WTC11 (cell line): ENCODE measurements at regions of chr16 and their contacts with region 1.

Region 1: GRCh38 chr16:4957720-4958509 is at the start of gene SEC14L5:
- DNase-seq: peak; percentile 100
- ATAC-seq: peak; percentile 95
- H3K4me3 Mint-ChIP-seq: peak within 1 kb of the TSS; percentile 89
- H3K27ac Mint-ChIP-seq: peak within 1 kb of the TSS; percentile 87
- H3K4me1 Mint-ChIP-seq: peaks cover 20% of the 10 kb centered on the region
- H3K27me3 Mint-ChIP-seq: peaks cover 13% of the 10 kb centered on the region
- CTCF ChIP-seq: no peak
- total RNA-seq, gene SEC14L5: 2.1 to 2.4 TPM (median 2.3 TPM) in 3 replicates

Region 2: GRCh38 chr16:4846891-4847773 is 110.8 kb before region 1 on chr16 and contains the starts of genes GLYR1 and UBN1:
- CTCF ChIA-PET with region 1: interaction called, 10 read pairs
- POLR2A ChIA-PET with region 1: no interaction called
- DNase-seq: peak; percentile 100
- ATAC-seq: peak; percentile 92
- H3K4me3 Mint-ChIP-seq: peak within 1 kb of the TSS; percentile 84
- H3K27ac Mint-ChIP-seq: peak within 1 kb of the TSS; percentile 83
- H3K4me1 Mint-ChIP-seq: peaks cover 30% of the 10 kb centered on the region
- H3K27me3 Mint-ChIP-seq: no peaks in the 10 kb centered on the region
- CTCF ChIP-seq: no peak
- total RNA-seq, gene GLYR1: 99.7 to 103 TPM (median 99.7 TPM) in 3 replicates
- total RNA-seq, gene UBN1: 35.1 to 38.5 TPM (median 35.9 TPM) in 3 replicates

Region 3: GRCh38 chr16:4936991-4937781 is 20.7 kb before region 1 on chr16 and contains the start of gene PPL:
- CTCF ChIA-PET with region 1: interaction called, 14 read pairs
- POLR2A ChIA-PET with region 1: no interaction called
- DNase-seq: peak; percentile 99
- ATAC-seq: peak; percentile 92
- H3K4me3 Mint-ChIP-seq: peak within 1 kb of the TSS; percentile 89
- H3K27ac Mint-ChIP-seq: peak within 1 kb of the TSS; percentile 80
- H3K4me1 Mint-ChIP-seq: peaks cover 15% of the 10 kb centered on the region
- H3K27me3 Mint-ChIP-seq: peaks cover 6% of the 10 kb centered on the region
- CTCF ChIP-seq: no peak
- total RNA-seq, gene PPL: 28.5 to 29.6 TPM (median 28.7 TPM) in 3 replicates

Region 4: DNA sequence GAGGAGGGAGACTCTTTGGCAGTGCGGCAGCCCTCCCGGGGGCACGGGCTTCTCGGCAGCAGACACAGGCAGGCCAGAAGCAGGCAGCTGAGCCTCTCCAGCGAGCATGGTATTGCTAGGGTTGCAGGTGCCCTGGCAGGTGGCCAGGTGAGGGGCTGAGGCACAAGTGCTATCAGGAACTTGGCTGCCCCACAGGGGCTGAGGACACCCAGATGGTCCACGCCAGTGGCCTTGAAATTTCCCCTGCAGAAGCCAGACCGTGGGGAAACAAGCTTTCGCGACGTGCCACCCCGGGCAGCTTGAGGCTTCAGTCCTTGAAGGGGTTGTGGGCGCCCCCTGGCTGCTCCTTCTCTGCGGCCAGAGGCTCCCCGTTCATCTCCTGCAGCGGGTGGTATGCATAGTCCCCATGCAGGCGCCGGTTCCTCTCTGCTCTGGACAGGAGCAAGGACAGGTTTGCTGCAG is 67.3 kb after region 1 on chr16:
- CTCF ChIA-PET with region 1: interaction called, 46 read pairs
- POLR2A ChIA-PET with region 1: interaction called, 3 read pairs
- DNase-seq: peak; percentile 85
- ATAC-seq: peak; percentile 93
- H3K4me3 Mint-ChIP-seq: no peak overlapping the region
- H3K27ac Mint-ChIP-seq: no peak overlapping the region
- H3K4me1 Mint-ChIP-seq: no peaks in the 10 kb centered on the region
- H3K27me3 Mint-ChIP-seq: no peaks in the 10 kb centered on the region
- CTCF ChIP-seq: peak; percentile 45; the same call in 1 of the 2 replicates

Region 5: DNA sequence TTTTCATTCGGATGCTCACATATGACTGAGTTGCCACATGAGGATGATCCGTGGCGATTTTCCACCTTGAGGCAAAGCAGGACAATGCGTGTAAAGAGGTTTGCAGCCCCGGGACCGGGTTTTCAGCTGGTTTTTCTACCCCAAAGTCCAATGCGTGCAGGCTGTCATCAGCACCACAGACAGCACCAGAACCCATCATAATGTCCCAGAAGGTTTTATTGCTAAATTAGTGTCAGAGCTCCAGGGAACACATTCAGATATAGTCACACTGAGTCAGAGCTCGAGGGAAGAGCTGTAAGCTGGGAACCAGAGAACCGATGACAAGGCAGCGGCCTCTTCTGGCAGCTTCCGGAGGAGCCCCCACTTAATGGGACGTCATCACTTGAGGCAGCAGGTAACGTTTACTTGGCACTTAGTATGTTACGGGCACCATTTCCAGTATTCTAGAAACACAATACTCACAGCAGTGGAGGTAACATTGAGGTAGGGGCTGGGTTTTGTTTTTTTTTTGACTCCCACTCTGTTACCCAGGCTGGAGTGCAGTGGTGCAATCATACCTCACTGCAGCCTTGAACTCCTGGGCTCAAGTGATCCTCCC is 84.8 kb after region 1 on chr16:
- CTCF ChIA-PET with region 1: no interaction called
- POLR2A ChIA-PET with region 1: no interaction called
- DNase-seq: no peak
- ATAC-seq: no peak
- H3K4me3 Mint-ChIP-seq: no peak overlapping the region
- H3K27ac Mint-ChIP-seq: no peak overlapping the region
- H3K4me1 Mint-ChIP-seq: peaks cover 10% of the 10 kb centered on the region
- H3K27me3 Mint-ChIP-seq: peaks cover 10% of the 10 kb centered on the region
- CTCF ChIP-seq: no peak